Heart right ventricle (tissue), 16 donors: ENCODE measurements at regions of chr12 and their contacts with region 1.

Region 1: GRCh38 chr12:124501112-124501561 is 66.3 kb downstream of the NCOR2 start:
- DNase-seq: peak in 1 of 2 donors; percentile 13
- ATAC-seq: no peak
- H3K4me3 ChIP-seq: no peak overlapping the region
- H3K27ac ChIP-seq: peak overlapping the region in 8 of 10 donors; percentile 37 to 69 (median 53)
- H3K4me1 ChIP-seq: peaks cover 34 to 97% (median 84%) of the 10 kb centered on the region in 9 donors
- H3K27me3 ChIP-seq: no peaks in the 10 kb centered on the region
- CTCF ChIP-seq: no peak

Region 2: DNA sequence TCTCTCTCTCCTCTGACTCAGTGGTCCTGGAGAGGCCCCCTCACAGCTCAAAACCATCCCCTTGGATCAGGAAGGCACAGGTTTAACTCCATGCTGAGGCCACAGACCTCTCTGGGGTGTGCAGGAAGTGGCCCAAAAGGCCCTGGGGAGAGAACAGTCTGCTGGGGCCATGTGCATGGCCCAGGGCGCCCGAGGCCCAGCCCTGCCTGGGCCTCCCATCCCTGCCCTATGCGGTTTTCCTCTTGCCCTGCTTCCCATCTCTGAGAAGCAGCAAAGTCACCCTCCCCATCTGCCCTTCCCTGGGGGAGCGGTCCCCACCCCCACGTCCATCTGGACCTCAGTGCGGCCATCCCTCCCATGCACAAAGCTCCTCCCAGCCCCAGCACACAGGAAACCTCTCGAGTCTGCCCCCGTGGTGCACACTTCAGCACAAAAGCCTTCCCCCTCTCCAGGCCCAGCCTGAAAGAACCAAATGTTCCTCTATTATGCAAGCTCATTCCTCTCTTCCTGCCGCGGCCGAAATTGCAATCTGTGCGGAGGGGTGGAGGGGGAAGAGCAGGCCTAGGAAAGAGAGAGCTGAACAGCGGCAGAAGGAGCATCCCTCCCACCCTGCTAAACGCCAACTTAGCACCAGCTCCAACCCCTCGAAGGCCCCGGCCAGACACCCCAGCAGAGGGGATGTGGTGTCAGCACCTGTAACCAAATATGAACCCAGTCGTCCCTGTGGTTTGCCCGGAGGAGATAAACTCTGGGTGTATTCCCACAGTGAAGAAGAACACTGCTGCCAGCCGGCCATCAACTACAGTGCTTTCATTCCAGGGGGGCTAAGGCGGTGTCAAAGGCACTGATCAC is 254.0 kb after region 1 on chr12:
- intact Hi-C with region 1: loop called in 1 of 10 experiments (anchors 5 kb)
- DNase-seq: peak; percentile 83 to 87
- ATAC-seq: peak; percentile 89 to 95 (median 93)
- H3K4me3 ChIP-seq: no peak overlapping the region
- H3K27ac ChIP-seq: peak overlapping the region; percentile 77 to 91 (median 84)
- H3K4me1 ChIP-seq: peaks cover 23 to 62% (median 49%) of the 10 kb centered on the region in 9 donors
- H3K27me3 ChIP-seq: no peaks in the 10 kb centered on the region
- CTCF ChIP-seq: no peak

Region 3: DNA sequence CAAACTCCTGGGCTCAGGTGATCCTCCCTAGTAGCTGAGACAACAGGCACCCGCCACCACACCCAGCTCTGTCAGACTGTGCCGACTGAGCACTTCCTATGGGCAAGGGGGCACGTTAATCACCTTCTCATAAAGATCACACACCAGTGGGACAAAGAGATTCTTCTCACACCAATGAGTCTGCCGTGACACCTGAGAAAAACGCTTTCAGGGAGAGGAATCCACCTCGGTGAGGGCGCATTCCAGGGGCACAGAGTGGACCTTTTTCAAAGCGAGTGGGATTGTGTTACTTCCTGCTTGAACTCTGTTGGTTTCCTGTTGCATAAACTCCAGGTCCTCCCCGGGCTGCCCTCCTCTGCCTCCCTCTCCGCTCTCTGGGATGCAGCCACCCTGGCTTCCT is 380.0 kb after region 1 on chr12:
- intact Hi-C with region 1: no loop called
- DNase-seq: no peak
- ATAC-seq: peak in 3 of 8 donors; percentile 30 to 43 (median 39)
- H3K4me3 ChIP-seq: no peak overlapping the region
- H3K27ac ChIP-seq: no peak overlapping the region
- H3K4me1 ChIP-seq: peaks cover 0 to 11% (median 0%) of the 10 kb centered on the region in 9 donors
- H3K27me3 ChIP-seq: no peaks in the 10 kb centered on the region
- CTCF ChIP-seq: no peak